Esophagus squamous epithelium (tissue), 5 donors: ENCODE measurements at regions of chr1 and their contacts with region 1.

Region 1: DNA sequence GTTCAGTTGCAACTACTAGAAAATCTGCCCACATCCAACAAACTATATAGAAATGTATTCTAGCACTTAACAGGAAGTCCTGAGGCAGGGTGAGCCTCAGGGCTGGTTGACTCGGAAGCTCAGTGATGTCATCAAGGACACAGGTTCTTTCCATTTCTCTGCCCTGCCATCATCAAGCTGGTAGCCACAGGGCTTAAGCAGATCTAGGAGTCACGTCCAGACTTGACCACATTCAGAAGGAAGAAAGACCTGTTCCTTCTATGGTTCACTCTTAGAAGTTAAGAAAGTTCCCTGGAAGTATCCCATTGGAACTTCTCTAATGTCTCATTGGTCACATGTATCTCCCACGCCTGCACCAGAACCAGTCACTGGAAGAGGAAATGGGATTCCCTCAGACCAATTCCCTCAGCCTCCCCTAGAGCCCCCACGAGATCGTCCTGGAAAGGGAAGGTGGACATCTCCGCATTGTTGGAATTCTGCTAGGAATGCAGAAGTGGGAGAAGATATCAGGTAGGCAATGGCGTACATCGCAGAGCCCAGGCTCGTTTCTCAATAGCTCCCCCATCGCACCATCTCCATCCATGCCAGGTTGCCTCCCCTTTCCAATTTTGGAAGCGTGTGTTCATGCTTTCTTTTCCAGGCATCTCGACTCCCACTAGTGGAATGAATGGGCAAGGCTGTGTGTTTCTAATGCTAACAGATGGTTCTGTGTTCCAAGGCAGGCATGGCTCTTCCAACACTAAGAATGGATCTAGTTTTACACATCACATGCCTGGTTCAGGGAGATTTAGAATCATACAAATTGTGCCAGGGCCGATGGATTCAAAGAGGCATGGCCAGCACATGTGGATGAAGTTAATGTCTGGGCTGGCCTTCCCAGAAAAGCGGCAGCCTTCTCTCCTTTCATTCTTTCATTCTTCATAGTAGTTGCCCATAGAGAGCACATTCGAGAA is 438.4 kb downstream of the PRDM2 start:
- DNase-seq: no peak
- H3K4me3 ChIP-seq: no peak overlapping the region
- H3K27ac ChIP-seq: peak overlapping the region; percentile 78 to 81 (median 80)
- H3K4me1 ChIP-seq: peaks cover 11 to 85% (median 51%) of the 10 kb centered on the region in 3 donors
- H3K27me3 ChIP-seq: no peaks in the 10 kb centered on the region
- CTCF ChIP-seq: peak in 1 of 6 experiments; percentile 18
- POLR2A ChIP-seq: no peak

Region 2: GRCh38 chr1:14194511-14194910 is 56.1 kb after region 1 on chr1:
- intact Hi-C with region 1: no loop called
- DNase-seq: no peak
- H3K4me3 ChIP-seq: no peak overlapping the region
- H3K27ac ChIP-seq: no peak overlapping the region
- H3K4me1 ChIP-seq: peaks cover 0 to 16% (median 3%) of the 10 kb centered on the region in 3 donors
- H3K27me3 ChIP-seq: no peaks in the 10 kb centered on the region
- CTCF ChIP-seq: no peak
- POLR2A ChIP-seq: no peak

Region 3: DNA sequence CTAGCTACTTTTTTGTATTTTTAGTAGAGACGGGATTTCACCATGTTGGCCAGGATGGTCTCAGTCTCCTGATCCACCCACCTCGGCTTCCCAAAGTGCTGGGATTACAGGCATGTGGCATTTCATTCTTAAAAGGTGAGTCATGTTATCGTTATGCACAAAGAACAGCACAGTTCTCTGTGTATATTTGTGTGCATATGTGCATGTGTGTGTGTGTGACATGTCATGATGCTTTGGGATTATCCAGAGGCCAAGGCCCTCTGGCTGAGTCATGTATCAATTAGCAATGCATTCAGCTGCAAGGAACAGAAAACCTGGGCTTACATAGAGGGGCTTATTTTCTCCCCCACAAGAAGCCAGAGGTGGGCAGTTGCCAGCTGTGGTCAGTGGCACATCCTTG is 158.4 kb after region 1 on chr1:
- intact Hi-C with region 1: loop called (anchors 10 kb)
- DNase-seq: no peak
- H3K4me3 ChIP-seq: no peak overlapping the region
- H3K27ac ChIP-seq: no peak overlapping the region
- H3K4me1 ChIP-seq: peaks cover 14 to 58% (median 21%) of the 10 kb centered on the region in 3 donors
- H3K27me3 ChIP-seq: no peaks in the 10 kb centered on the region
- CTCF ChIP-seq: no peak
- POLR2A ChIP-seq: no peak